ENCODE measurements at regions of chr2 and their contacts with region 1.

Region 1: GRCh38 chr2:148020111-148021058 is at the start of gene ORC4:
- DNase-seq: peak; percentile 70 to 98 (median 97)
- ATAC-seq: peak; percentile 94
- H3K4me3 ChIP-seq: peak within 1 kb of the TSS; percentile 89
- H3K4me3 Mint-ChIP-seq: peak within 1 kb of the TSS; percentile 92 to 100 (median 98)
- H3K27ac ChIP-seq: peak within 1 kb of the TSS; percentile 91
- H3K27ac Mint-ChIP-seq: peak within 1 kb of the TSS; percentile 89 to 99 (median 97)
- H3K4me1 ChIP-seq: peaks cover 20 to 36% of the 10 kb centered on the region in 2 donors
- H3K4me1 Mint-ChIP-seq: peaks cover 27 to 84% (median 70%) of the 10 kb centered on the region in 7 donors
- H3K27me3 ChIP-seq: no peaks in the 10 kb centered on the region
- H3K27me3 Mint-ChIP-seq: no peaks in the 10 kb centered on the region
- total RNA-seq, gene ORC4: 34.1 to 63.7 (median 44.8) TPM

Region 2: GRCh38 chr2:147756103-147756502 is 264.3 kb before region 1 on chr2:
- CTCF ChIA-PET with region 1: no interaction called
- POLR2A ChIA-PET with region 1: no interaction called
- intact Hi-C with region 1: no loop called
- DNase-seq: no peak
- ATAC-seq: no peak
- H3K4me3 ChIP-seq: no peak overlapping the region
- H3K4me3 Mint-ChIP-seq: no peak overlapping the region
- H3K27ac ChIP-seq: no peak overlapping the region
- H3K27ac Mint-ChIP-seq: no peak overlapping the region
- H3K4me1 ChIP-seq: no peaks in the 10 kb centered on the region
- H3K4me1 Mint-ChIP-seq: no peaks in the 10 kb centered on the region
- H3K27me3 ChIP-seq: no peaks in the 10 kb centered on the region
- H3K27me3 Mint-ChIP-seq: peaks cover 0 to 6% (median 0%) of the 10 kb centered on the region in 5 donors

Region 3: GRCh38 chr2:147989809-147990403 is 30.5 kb before region 1 on chr2:
- CTCF ChIA-PET with region 1: interaction called, 3 read pairs
- POLR2A ChIA-PET with region 1: interaction called, 4 read pairs
- intact Hi-C with region 1: loop called in 1 of 2 experiments (anchors 1 kb)
- DNase-seq: peak in 7 of 9 donors; percentile 37 to 70 (median 52)
- ATAC-seq: peak; percentile 87
- H3K4me3 ChIP-seq: no peak overlapping the region
- H3K4me3 Mint-ChIP-seq: no peak overlapping the region
- H3K27ac ChIP-seq: no peak overlapping the region
- H3K27ac Mint-ChIP-seq: peak overlapping the region in 7 of 9 donors; percentile 11 to 84 (median 28)
- H3K4me1 ChIP-seq: no peaks in the 10 kb centered on the region
- H3K4me1 Mint-ChIP-seq: peaks cover 6 to 50% (median 42%) of the 10 kb centered on the region in 7 donors
- H3K27me3 ChIP-seq: no peaks in the 10 kb centered on the region
- H3K27me3 Mint-ChIP-seq: no peaks in the 10 kb centered on the region

Region 4: DNA sequence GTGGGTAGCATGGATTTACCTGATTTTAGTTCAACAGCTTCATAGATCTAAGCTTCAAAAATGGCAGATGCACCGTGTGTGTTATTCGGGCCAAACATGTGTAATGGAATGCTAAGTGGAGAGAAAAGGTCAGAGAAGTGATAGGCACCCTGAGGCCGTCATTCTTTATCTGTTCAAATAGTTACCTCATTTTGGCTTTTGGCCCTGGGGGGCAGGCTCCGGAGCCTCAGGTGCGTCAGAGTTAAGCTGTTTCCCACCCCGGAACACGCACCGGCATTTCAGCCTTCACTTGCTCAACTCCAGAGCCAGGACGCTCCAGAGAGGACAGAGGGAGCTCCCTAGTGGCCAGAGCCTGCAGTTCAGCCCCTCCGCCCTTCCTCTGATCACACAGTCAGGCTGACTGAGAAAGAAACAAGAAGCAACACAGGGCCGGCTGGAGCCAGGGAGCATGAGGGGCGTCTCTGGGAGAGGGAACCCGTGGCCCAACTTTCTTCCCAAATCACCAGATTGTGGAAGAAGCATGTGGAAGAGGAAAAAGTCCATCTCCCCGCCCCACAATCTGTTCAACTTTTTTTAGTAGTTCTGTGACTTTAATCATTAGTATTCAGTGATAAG is 489.0 kb after region 1 on chr2:
- CTCF ChIA-PET with region 1: interaction called, 4 read pairs
- POLR2A ChIA-PET with region 1: interaction called, 5 read pairs
- intact Hi-C with region 1: loop called (anchors 1 kb)
- DNase-seq: peak; percentile 54 to 86 (median 78)
- ATAC-seq: peak; percentile 100
- H3K4me3 ChIP-seq: peak overlapping the region; percentile 51
- H3K4me3 Mint-ChIP-seq: peak overlapping the region; percentile 65 to 91 (median 84)
- H3K27ac ChIP-seq: peak overlapping the region; percentile 37
- H3K27ac Mint-ChIP-seq: peak overlapping the region; percentile 13 to 90 (median 88)
- H3K4me1 ChIP-seq: no peaks in the 10 kb centered on the region
- H3K4me1 Mint-ChIP-seq: peaks cover 3 to 29% (median 16%) of the 10 kb centered on the region in 7 donors
- H3K27me3 ChIP-seq: no peaks in the 10 kb centered on the region
- H3K27me3 Mint-ChIP-seq: no peaks in the 10 kb centered on the region

Region 5: DNA sequence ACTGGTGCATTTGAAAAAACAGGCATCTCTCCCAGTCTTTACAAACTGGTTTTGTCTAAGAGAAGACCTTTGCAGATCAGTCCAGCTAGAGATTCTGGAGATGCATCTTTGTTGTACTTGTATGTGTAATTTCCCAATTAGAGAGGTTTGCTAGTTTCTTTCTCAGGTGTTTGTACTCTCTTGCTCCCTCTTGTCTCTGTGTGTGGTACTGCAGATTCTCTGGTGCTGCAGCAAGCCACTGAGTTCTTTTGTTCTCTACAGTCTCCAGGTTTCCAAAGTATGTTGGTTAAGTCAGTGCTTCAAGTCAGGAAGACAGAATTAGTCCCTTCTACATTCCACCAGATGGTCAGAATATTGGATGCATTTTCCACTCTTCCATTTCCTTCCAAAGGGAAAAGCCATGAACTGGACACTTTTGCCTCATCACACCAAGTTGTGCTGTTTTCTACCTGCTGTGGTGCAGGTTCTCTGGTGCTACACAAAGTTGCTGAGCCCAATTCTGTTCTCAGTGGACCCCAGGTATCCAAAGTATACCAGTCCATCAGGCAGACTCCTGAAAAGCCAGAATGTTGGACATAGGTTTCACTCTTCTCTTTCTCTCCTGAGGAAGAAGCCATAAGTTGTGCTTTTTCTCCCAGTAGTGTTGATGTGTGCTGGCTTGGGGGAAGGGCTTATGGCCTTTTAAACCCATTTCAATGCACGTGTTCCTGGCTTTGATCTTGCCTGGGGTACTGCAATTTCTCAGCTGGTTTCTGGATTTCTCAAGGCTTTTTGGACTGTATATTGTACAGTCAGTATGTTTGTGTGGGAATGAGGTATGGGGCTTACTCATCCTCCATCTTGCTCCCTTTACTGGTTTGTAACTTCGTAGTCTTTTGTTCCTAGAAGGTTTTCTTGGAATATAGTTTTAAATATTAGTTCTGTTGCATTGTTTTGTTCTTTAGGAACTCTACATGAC is 654.0 kb after region 1 on chr2:
- CTCF ChIA-PET with region 1: no interaction called
- POLR2A ChIA-PET with region 1: no interaction called
- intact Hi-C with region 1: loop called in 1 of 2 experiments (anchors 1 kb)
- DNase-seq: peak in 6 of 9 donors; percentile 13 to 56 (median 32)
- ATAC-seq: peak; percentile 85
- H3K4me3 ChIP-seq: no peak overlapping the region
- H3K4me3 Mint-ChIP-seq: peak overlapping the region in 9 of 10 donors; percentile 16 to 77 (median 46)
- H3K27ac ChIP-seq: no peak overlapping the region
- H3K27ac Mint-ChIP-seq: peak overlapping the region in 6 of 9 donors; percentile 18 to 85 (median 44)
- H3K4me1 ChIP-seq: peaks cover 6 to 26% of the 10 kb centered on the region in 2 donors
- H3K4me1 Mint-ChIP-seq: peaks cover 44 to 88% (median 83%) of the 10 kb centered on the region in 7 donors
- H3K27me3 ChIP-seq: no peaks in the 10 kb centered on the region
- H3K27me3 Mint-ChIP-seq: no peaks in the 10 kb centered on the region

Region 6: DNA sequence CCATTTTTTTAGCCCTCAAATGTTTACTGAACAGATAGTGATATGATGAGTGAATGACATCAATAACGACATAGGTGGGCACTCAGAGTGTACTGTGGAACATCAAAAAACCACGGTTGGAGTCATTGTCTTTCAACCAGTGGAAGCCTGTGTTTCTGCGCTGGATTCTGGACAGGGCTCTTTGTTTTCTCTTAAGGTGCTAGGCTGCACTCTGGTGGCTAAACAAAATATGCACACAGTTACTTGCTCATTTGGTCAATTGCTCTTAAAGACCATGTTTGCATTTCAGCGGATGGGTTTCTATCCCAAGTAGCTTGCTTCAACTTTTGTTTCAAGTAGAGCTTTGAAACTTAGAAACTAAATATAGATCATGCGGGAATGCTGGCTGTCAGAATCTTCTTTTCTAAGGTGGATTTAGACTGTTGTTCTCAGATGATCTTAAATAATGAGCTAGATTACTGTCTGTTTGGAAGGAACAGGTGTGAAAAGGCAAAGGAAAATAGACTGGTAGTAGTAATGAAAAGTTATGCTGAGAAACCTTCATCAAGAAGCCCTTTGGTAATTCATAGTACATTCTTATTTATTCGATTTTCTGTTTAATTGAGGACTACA is 969.6 kb after region 1 on chr2:
- CTCF ChIA-PET with region 1: no interaction called
- POLR2A ChIA-PET with region 1: no interaction called
- intact Hi-C with region 1: loop called in 1 of 2 experiments (anchors 1 kb)
- DNase-seq: peak in 8 of 9 donors; percentile 28 to 65 (median 56)
- ATAC-seq: peak; percentile 86
- H3K4me3 ChIP-seq: no peak overlapping the region
- H3K4me3 Mint-ChIP-seq: no peak overlapping the region
- H3K27ac ChIP-seq: no peak overlapping the region
- H3K27ac Mint-ChIP-seq: no peak overlapping the region
- H3K4me1 ChIP-seq: no peaks in the 10 kb centered on the region
- H3K4me1 Mint-ChIP-seq: peaks cover 0 to 4% (median 4%) of the 10 kb centered on the region in 7 donors
- H3K27me3 ChIP-seq: no peaks in the 10 kb centered on the region
- H3K27me3 Mint-ChIP-seq: no peaks in the 10 kb centered on the region